ENCODE measurements at regions of chr5 and their contacts with region 1.

Region 1: DNA sequence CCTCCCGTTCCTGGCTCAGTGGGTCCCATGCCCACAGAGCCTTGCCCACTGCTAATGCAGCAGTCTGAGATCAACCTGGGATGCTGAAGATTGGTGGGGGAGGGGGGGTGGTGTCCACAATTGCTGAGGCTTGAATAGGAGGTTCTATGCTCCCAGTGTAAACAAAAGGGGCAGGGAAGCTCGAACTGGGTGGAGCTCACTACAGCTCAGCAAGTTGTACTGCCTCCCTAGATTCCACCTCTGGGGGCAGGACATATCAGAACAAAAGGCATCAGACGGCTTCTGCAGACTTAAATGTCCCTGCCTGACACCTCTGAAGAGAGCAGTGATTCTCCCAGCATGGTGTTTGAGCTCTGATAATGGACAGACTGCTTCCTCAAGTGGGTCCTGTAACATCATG is 885.6 kb upstream of the COX7C start:
- DNase-seq: no peak
- H3K4me3 ChIP-seq: no peak overlapping the region
- H3K27ac ChIP-seq: no peak overlapping the region
- H3K4me1 ChIP-seq: no peaks in the 10 kb centered on the region
- H3K27me3 ChIP-seq: no peaks in the 10 kb centered on the region
- CTCF ChIP-seq: no peak

Region 2: DNA sequence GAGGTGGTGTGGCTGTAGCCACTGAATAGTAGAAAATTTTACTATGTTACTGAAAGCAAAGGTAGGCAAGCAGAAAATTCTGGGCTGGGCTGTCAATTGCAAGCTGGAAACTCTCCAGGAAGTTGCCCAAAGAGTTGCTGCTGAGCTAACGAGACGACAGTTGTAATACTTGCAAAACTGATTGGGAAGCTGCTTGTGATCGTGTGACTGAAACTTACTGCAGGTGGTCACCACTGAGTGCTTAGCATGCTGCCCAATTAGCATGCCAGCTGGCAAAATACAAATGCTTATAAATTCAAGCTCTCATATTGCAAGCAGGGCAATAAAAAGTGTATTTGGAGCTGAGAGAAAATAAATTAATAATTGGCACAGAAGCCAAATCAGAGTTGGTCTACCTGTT is 589.0 kb before region 1 on chr5:
- CTCF ChIA-PET with region 1: no interaction called
- POLR2A ChIA-PET with region 1: interaction called, 13 read pairs
- intact Hi-C with region 1: no loop called
- DNase-seq: no peak
- H3K4me3 ChIP-seq: no peak overlapping the region
- H3K27ac ChIP-seq: no peak overlapping the region
- H3K4me1 ChIP-seq: no peaks in the 10 kb centered on the region
- H3K27me3 ChIP-seq: no peaks in the 10 kb centered on the region
- CTCF ChIP-seq: no peak

Region 3: DNA sequence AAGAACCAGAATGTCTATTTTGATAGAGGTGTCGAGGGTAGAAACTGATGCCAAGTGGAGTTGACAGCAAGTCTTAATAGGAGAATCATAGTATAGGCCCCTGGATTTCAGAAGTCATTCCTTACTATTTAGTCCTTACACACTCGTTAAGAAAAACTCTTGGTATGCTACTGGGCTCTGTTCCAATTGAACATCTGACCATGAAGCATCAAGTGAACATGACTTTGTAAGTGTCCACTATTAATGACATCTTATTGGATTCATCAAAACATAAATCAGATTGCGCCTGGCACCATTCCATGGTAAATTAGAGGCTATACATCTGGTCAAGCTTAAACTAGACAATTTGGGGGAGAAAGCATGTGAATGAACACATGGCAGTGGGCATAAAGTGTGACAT is 291.0 kb before region 1 on chr5:
- CTCF ChIA-PET with region 1: no interaction called
- POLR2A ChIA-PET with region 1: no interaction called
- intact Hi-C with region 1: no loop called
- DNase-seq: no peak
- H3K4me3 ChIP-seq: no peak overlapping the region
- H3K27ac ChIP-seq: no peak overlapping the region
- H3K4me1 ChIP-seq: no peaks in the 10 kb centered on the region
- H3K27me3 ChIP-seq: no peaks in the 10 kb centered on the region
- CTCF ChIP-seq: no peak

Measured in A673 (cell line).